Left lung (tissue), 14 donors: ENCODE measurements at regions of chr1 and their contacts with region 1.

Region 1: GRCh38 chr1:180482425-180483275 is 19.7 kb downstream of the ACBD6 start:
- DNase-seq: peak in 2 of 4 donors; percentile 36 to 61
- ATAC-seq: peak; percentile 71
- H3K4me3 ChIP-seq: no peak overlapping the region
- H3K27ac ChIP-seq: no peak overlapping the region
- H3K4me1 ChIP-seq: peaks cover 0 to 7% of the 10 kb centered on the region in 2 donors
- H3K27me3 ChIP-seq: no peaks in the 10 kb centered on the region
- CTCF ChIP-seq: peak; percentile 60 to 75

Region 2: DNA sequence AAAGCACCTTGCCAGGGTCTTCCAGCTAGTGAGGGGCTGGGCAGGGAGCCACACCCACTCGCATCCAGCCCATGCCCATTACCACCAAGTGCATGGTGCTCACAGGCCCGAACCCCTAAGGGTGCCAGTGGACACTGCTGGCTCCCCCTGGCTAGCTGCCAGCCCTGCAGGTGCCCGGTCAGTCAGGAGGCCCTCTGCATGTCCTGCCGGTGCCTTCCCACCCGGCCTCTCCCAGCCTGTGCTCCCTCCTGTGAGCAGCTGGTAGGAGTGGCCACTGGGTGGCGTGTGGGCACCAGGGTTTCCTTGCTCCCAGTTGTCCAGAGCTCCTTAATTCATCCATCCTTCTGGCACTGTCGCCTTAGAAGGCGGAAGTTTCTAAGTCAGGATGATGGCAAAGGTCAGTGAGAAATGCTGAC is 294.6 kb before region 1 on chr1:
- intact Hi-C with region 1: loop called in 1 of 2 experiments (anchors 10 kb)
- DNase-seq: peak in 3 of 4 donors; percentile 23 to 68 (median 46)
- ATAC-seq: peak; percentile 72
- H3K4me3 ChIP-seq: no peak overlapping the region
- H3K27ac ChIP-seq: no peak overlapping the region
- H3K4me1 ChIP-seq: no peaks in the 10 kb centered on the region
- H3K27me3 ChIP-seq: no peaks in the 10 kb centered on the region
- CTCF ChIP-seq: peak; percentile 45 to 46

Region 3: GRCh38 chr1:180252638-180253536 is 229.8 kb before region 1 on chr1:
- intact Hi-C with region 1: loop called in 1 of 2 experiments (anchors 5 kb)
- DNase-seq: peak in 2 of 4 donors; percentile 80 to 93
- ATAC-seq: peak; percentile 81
- H3K4me3 ChIP-seq: no peak overlapping the region
- H3K27ac ChIP-seq: no peak overlapping the region
- H3K4me1 ChIP-seq: peaks cover 0 to 3% of the 10 kb centered on the region in 2 donors
- H3K27me3 ChIP-seq: peaks cover 12 to 72% of the 10 kb centered on the region in 2 donors
- CTCF ChIP-seq: peak; percentile 79 to 92